ENCODE measurements at regions of chr9 and their contacts with region 1.

Region 1: GRCh38 chr9:37913480-37914153 is 9.7 kb upstream of the SLC25A51 start:
- DNase-seq: peak; percentile 28 to 83 (median 68)
- ATAC-seq: peak; percentile 78 to 85 (median 84)
- H3K4me3 ChIP-seq: no peak overlapping the region
- H3K4me3 Mint-ChIP-seq: no peak overlapping the region
- H3K27ac ChIP-seq: no peak overlapping the region
- H3K27ac Mint-ChIP-seq: no peak overlapping the region
- H3K4me1 ChIP-seq: peaks cover 0 to 2% of the 10 kb centered on the region in 2 experiments
- H3K4me1 Mint-ChIP-seq: peaks cover 0 to 2% (median 0%) of the 10 kb centered on the region in 3 donors
- H3K27me3 ChIP-seq: peaks cover 0 to 9% of the 10 kb centered on the region in 2 experiments
- H3K27me3 Mint-ChIP-seq: peaks cover 0 to 2% of the 10 kb centered on the region in 2 donors

Region 2: DNA sequence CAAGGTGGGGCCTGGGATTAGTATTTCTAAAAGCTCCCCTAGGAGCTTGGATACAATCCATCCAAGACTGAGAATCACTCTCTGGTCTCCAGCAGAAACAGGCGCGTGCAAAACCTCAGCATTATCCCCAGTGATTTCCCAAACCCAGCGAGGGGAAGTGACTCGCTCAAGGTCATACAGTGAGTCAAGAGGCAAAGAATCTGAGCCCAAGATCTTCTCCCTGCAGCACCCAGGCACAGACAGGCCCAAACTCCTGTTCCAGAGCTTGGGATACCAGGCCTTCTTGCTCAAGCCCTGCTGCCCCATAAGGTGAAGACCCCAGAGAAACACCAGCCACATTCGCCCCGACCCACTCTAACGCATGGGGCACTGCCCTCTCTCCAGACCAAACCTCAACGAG is 122.3 kb after region 1 on chr9:
- CTCF ChIA-PET with region 1: no interaction called
- POLR2A ChIA-PET with region 1: no interaction called
- DNase-seq: no peak
- ATAC-seq: no peak
- H3K4me3 ChIP-seq: no peak overlapping the region
- H3K4me3 Mint-ChIP-seq: no peak overlapping the region
- H3K27ac ChIP-seq: no peak overlapping the region
- H3K27ac Mint-ChIP-seq: no peak overlapping the region
- H3K4me1 ChIP-seq: no peaks in the 10 kb centered on the region
- H3K4me1 Mint-ChIP-seq: no peaks in the 10 kb centered on the region
- H3K27me3 ChIP-seq: peaks cover 0 to 7% of the 10 kb centered on the region in 2 experiments
- H3K27me3 Mint-ChIP-seq: peaks cover 0 to 2% of the 10 kb centered on the region in 2 donors

Region 3: GRCh38 chr9:38445154-38446043 is 531.8 kb after region 1 on chr9:
- CTCF ChIA-PET with region 1: no interaction called
- POLR2A ChIA-PET with region 1: interaction called in 1 of 2 experiments, 10 read pairs
- DNase-seq: no peak
- ATAC-seq: peak in 1 of 4 experiments; percentile 33
- H3K4me3 ChIP-seq: no peak overlapping the region
- H3K4me3 Mint-ChIP-seq: no peak overlapping the region
- H3K27ac ChIP-seq: no peak overlapping the region
- H3K27ac Mint-ChIP-seq: no peak overlapping the region
- H3K4me1 ChIP-seq: no peaks in the 10 kb centered on the region
- H3K4me1 Mint-ChIP-seq: peaks cover 0 to 3% (median 0%) of the 10 kb centered on the region in 3 donors
- H3K27me3 ChIP-seq: peaks cover 0 to 17% of the 10 kb centered on the region in 2 experiments
- H3K27me3 Mint-ChIP-seq: peaks cover 5 to 31% of the 10 kb centered on the region in 2 donors